ENCODE measurements at regions of chr1 and their contacts with region 1.

Region 1: DNA sequence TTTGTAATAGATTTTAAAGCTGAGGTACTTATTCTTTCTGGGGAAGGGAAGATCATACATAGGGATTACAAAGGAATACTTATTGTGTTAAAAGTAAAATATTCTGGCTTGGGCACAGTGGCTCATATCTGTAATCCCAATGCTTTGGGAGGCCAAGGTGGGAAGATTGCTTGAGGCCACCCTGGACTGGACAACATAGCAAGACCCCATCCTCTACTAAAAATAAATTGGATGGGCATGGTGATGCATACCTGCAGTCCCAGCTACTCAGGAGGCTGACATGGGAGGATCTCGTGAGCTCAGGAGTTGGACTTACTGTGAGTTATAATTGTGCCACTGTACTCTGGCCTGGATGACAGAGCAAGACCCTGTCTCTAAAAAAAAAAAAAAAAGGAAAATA is 27.6 kb downstream of the GABPB2 start:
- DNase-seq: no peak
- ATAC-seq: no peak
- H3K4me3 Mint-ChIP-seq: no peak overlapping the region
- H3K27ac Mint-ChIP-seq: no peak overlapping the region
- H3K4me1 Mint-ChIP-seq: no peaks in the 10 kb centered on the region
- H3K27me3 Mint-ChIP-seq: no peaks in the 10 kb centered on the region; the same call in 1 of the 2 replicates
- CTCF ChIP-seq: no peak

Region 2: GRCh38 chr1:151024540-151025146 is 73.5 kb before region 1 on chr1:
- CTCF ChIA-PET with region 1: interaction called, 12 read pairs
- POLR2A ChIA-PET with region 1: interaction called, 3 read pairs
- DNase-seq: peak; percentile 92
- ATAC-seq: peak; percentile 100
- H3K4me3 Mint-ChIP-seq: no peak overlapping the region
- H3K27ac Mint-ChIP-seq: peak overlapping the region; percentile 33; the same call in 1 of the 2 replicates
- H3K4me1 Mint-ChIP-seq: no peaks in the 10 kb centered on the region
- H3K27me3 Mint-ChIP-seq: no peaks in the 10 kb centered on the region
- CTCF ChIP-seq: peak; percentile 67

Region 3: DNA sequence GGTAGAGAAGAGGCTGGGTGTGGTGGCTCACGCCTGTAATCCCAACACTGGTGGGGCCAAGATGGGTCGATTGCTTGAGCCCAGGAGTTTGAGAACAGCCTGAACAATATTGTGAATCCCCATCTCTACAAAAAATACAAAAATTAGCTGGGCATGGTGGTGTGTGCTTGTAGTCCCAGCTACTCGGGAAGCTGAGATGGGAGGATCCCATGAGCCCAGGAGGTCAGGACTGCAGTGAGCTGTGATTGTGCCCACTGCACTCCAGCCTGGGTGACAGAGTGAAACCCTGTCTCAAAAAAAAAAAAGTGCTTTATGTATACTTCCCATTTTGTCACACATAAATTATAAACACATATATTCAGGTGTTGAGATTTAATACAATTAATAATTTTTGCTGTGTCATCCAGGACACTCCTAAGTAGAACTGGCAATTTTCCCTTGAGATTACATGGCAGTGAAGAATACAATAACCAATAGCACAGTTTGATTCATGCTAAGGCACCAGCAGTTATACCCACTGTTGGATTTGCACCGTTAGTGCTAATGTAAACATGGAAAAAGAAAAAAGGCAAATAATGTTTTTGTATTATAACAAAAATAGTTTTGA is 12.1 kb before region 1 on chr1:
- CTCF ChIA-PET with region 1: interaction called, 23 read pairs
- POLR2A ChIA-PET with region 1: interaction called, 6 read pairs
- DNase-seq: no peak
- ATAC-seq: no peak
- H3K4me3 Mint-ChIP-seq: no peak overlapping the region
- H3K27ac Mint-ChIP-seq: no peak overlapping the region
- H3K4me1 Mint-ChIP-seq: peaks cover 5% of the 10 kb centered on the region
- H3K27me3 Mint-ChIP-seq: no peaks in the 10 kb centered on the region
- CTCF ChIP-seq: no peak

Region 4: DNA sequence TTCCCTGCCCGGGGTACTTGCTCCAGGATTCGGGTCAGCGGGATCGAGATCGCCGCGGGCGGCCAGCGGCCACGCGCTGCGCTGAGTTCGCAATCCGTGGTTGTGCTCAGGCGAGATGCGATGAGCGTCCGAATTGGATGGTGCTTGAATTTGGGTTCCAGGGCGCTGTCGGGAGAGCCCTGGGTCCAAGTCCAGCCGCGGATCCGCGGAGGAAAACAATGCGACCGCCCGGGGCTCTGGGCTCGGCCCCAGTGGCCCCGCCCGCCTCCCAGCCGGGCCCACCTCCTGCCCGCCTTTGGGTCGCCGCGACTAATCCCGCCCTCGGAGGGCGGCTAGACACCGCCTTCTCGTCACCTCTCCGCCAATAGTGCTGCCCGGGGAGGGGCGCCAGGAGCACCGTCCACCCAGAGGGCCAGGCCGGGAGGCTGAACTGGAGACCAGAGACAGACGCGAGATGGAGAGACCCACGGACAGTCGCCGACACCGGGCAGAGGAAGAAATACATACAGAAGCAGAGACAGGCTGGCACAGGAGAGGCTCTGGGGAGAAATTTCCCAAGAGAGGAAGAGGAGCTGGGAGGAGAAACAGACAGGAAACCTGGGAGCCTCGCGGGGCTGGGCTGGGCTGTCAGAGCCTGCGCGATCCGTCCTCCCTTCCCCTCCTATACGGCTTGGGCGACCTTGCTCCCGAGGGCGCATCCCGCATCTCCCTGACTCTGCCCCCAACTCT is 48.5 kb after region 1 on chr1 and contains the start of gene SEMA6C:
- CTCF ChIA-PET with region 1: interaction called, 63 read pairs
- POLR2A ChIA-PET with region 1: no interaction called
- DNase-seq: peak; percentile 94
- ATAC-seq: peak; percentile 92
- H3K4me3 Mint-ChIP-seq: peak within 1 kb of the TSS; percentile 93
- H3K27ac Mint-ChIP-seq: no peak within 1 kb of the TSS
- H3K4me1 Mint-ChIP-seq: peaks cover 38% of the 10 kb centered on the region
- H3K27me3 Mint-ChIP-seq: peaks cover 44% of the 10 kb centered on the region
- CTCF ChIP-seq: no peak
- total RNA-seq, gene SEMA6C: 16.3 to 21.0 TPM (median 18.1 TPM) in 3 replicates

Region 5: DNA sequence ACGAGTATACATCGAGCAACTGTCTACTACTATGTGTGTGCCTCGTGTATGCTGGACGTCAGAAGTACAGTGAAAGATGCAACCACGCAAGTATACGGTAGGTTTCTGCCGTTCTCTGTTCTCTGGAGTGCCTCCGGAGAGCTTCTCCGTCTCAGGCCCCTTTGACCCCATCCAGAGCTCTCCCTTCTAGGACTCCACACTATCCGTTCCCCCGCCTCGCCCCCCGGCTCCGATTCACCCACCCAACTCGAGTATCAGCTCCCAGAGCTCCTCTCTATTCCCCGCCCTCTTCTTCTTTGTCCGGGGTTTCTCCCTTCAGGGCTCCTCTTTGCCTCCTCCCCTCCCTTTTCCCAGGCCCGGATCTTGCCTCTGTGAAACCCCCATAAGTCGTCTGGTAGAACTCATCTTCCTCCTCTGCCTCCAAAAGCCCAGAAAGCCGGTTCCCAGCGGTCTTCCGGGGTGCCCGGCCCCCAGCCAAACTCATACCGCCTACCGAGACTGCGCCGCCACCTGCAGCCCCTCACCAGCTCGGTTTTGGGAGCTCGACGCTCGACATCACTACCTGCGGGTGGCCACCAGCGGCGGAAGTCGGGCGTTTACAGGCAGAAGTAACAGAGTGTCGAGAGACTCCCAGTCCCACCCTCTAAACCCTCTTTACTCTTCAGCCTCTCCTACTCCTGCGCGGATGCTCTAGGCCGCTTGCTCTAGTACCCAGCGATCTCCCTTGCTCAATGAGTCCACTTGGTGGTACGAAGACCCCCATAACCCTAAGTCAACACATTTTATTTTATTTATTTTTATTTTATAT is 91.7 kb after region 1 on chr1 and contains the start of gene VPS72:
- CTCF ChIA-PET with region 1: interaction called, 24 read pairs
- POLR2A ChIA-PET with region 1: no interaction called
- DNase-seq: peak; percentile 83
- ATAC-seq: peak; percentile 93
- H3K4me3 Mint-ChIP-seq: peak within 1 kb of the TSS; percentile 99
- H3K27ac Mint-ChIP-seq: peak within 1 kb of the TSS; percentile 97
- H3K4me1 Mint-ChIP-seq: peaks cover 9% of the 10 kb centered on the region
- H3K27me3 Mint-ChIP-seq: no peaks in the 10 kb centered on the region; the same call in 1 of the 2 replicates
- CTCF ChIP-seq: no peak
- total RNA-seq, gene VPS72: 87.2 to 103 TPM (median 97.6 TPM) in 3 replicates

Measured in WTC11 (cell line).